B cell (primary cell): ENCODE measurements at regions of chr13 and their contacts with region 1.

Region 1: GRCh38 chr13:27826379-27827353 is 34.4 kb downstream of the GSX1 start:
- DNase-seq: peak; percentile 79
- ATAC-seq: peak; percentile 69
- H3K4me3 ChIP-seq: no peak overlapping the region
- H3K4me3 Mint-ChIP-seq: no peak overlapping the region
- H3K27ac ChIP-seq: no peak overlapping the region
- H3K27ac Mint-ChIP-seq: no peak overlapping the region
- H3K4me1 ChIP-seq: peaks cover 5 to 15% of the 10 kb centered on the region in 2 donors
- H3K4me1 Mint-ChIP-seq: peaks cover 7% of the 10 kb centered on the region
- H3K27me3 ChIP-seq: peaks cover 0 to 76% (median 27%) of the 10 kb centered on the region in 4 experiments
- H3K27me3 Mint-ChIP-seq: peaks cover 76% of the 10 kb centered on the region
- CTCF ChIP-seq: peak; percentile 90

Region 2: DNA sequence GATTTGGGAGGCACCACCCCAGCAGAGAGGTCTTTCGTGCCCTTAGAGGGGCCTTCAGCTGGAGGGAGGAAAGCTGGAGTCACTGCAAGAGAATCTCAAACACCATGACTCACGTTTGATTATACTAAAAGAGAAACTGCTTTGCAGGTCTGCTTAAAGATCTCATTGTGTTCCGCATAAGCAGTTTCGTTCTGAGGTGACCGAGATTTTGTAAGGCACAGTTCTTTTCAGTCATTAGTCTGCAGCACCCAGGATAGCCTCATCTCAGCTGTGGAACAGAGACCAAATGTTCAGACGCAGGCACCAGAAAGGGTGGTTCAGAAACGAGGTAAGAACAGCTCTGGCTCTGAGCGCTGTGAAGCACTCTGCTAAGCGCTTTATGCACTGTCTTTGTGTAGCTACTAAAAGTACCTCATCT is 473.5 kb before region 1 on chr13:
- CTCF ChIA-PET with region 1: interaction called, 322 read pairs
- POLR2A ChIA-PET with region 1: no interaction called
- intact Hi-C with region 1: no loop called
- DNase-seq: peak; percentile 50
- ATAC-seq: peak; percentile 89
- H3K4me3 ChIP-seq: peak overlapping the region in 2 of 5 experiments; percentile 22 to 29
- H3K4me3 Mint-ChIP-seq: peak overlapping the region; percentile 76
- H3K27ac ChIP-seq: peak overlapping the region in 1 of 2 donors; percentile 10
- H3K27ac Mint-ChIP-seq: peak overlapping the region; percentile 71
- H3K4me1 ChIP-seq: peaks cover 4 to 14% of the 10 kb centered on the region in 2 donors
- H3K4me1 Mint-ChIP-seq: peaks cover 17% of the 10 kb centered on the region
- H3K27me3 ChIP-seq: peaks cover 0 to 3% (median 0%) of the 10 kb centered on the region in 4 experiments
- H3K27me3 Mint-ChIP-seq: peaks cover 6% of the 10 kb centered on the region
- CTCF ChIP-seq: no peak

Region 3: GRCh38 chr13:27383127-27383921 is 443.3 kb before region 1 on chr13:
- CTCF ChIA-PET with region 1: interaction called, 374 read pairs
- POLR2A ChIA-PET with region 1: no interaction called
- intact Hi-C with region 1: no loop called
- DNase-seq: no peak
- ATAC-seq: no peak
- H3K4me3 ChIP-seq: no peak overlapping the region
- H3K4me3 Mint-ChIP-seq: no peak overlapping the region
- H3K27ac ChIP-seq: no peak overlapping the region
- H3K27ac Mint-ChIP-seq: no peak overlapping the region
- H3K4me1 ChIP-seq: no peaks in the 10 kb centered on the region
- H3K4me1 Mint-ChIP-seq: no peaks in the 10 kb centered on the region
- H3K27me3 ChIP-seq: peaks cover 0 to 17% (median 0%) of the 10 kb centered on the region in 4 experiments
- H3K27me3 Mint-ChIP-seq: peaks cover 4% of the 10 kb centered on the region
- CTCF ChIP-seq: no peak

Region 4: GRCh38 chr13:27424246-27425157 is 402.2 kb before region 1 on chr13 and contains the start of gene GTF3A:
- CTCF ChIA-PET with region 1: interaction called, 13 read pairs
- POLR2A ChIA-PET with region 1: no interaction called
- intact Hi-C with region 1: no loop called
- DNase-seq: peak; percentile 96
- ATAC-seq: peak; percentile 66
- H3K4me3 ChIP-seq: peak within 1 kb of the TSS; percentile 74 to 97 (median 83)
- H3K4me3 Mint-ChIP-seq: peak within 1 kb of the TSS; percentile 82
- H3K27ac ChIP-seq: peak within 1 kb of the TSS; percentile 78 to 88
- H3K27ac Mint-ChIP-seq: peak within 1 kb of the TSS; percentile 88
- H3K4me1 ChIP-seq: peaks cover 25 to 36% of the 10 kb centered on the region in 2 donors
- H3K4me1 Mint-ChIP-seq: peaks cover 39% of the 10 kb centered on the region
- H3K27me3 ChIP-seq: no peaks in the 10 kb centered on the region
- H3K27me3 Mint-ChIP-seq: no peaks in the 10 kb centered on the region
- CTCF ChIP-seq: no peak
- total RNA-seq, gene GTF3A: 114 and 122 TPM in 2 replicates

Region 5: GRCh38 chr13:27770809-27771208 is 55.9 kb before region 1 on chr13:
- CTCF ChIA-PET with region 1: interaction called, 29 read pairs
- POLR2A ChIA-PET with region 1: no interaction called
- intact Hi-C with region 1: no loop called
- DNase-seq: no peak
- ATAC-seq: no peak
- H3K4me3 ChIP-seq: no peak overlapping the region
- H3K4me3 Mint-ChIP-seq: no peak overlapping the region
- H3K27ac ChIP-seq: no peak overlapping the region
- H3K27ac Mint-ChIP-seq: no peak overlapping the region
- H3K4me1 ChIP-seq: peaks cover 5 to 12% of the 10 kb centered on the region in 2 donors
- H3K4me1 Mint-ChIP-seq: peaks cover 10% of the 10 kb centered on the region
- H3K27me3 ChIP-seq: peaks cover 0 to 17% (median 2%) of the 10 kb centered on the region in 4 experiments
- H3K27me3 Mint-ChIP-seq: peaks cover 48% of the 10 kb centered on the region
- CTCF ChIP-seq: no peak

Region 6: GRCh38 chr13:27919934-27920676 is 93.4 kb after region 1 on chr13 and contains the start of gene PDX1:
- CTCF ChIA-PET with region 1: no interaction called
- POLR2A ChIA-PET with region 1: no interaction called
- intact Hi-C with region 1: loop called (anchors 10 kb)
- DNase-seq: peak; percentile 55
- ATAC-seq: peak; percentile 44
- H3K4me3 ChIP-seq: peak within 1 kb of the TSS in 4 of 5 experiments; percentile 27 to 61 (median 50)
- H3K4me3 Mint-ChIP-seq: peak within 1 kb of the TSS; percentile 81
- H3K27ac ChIP-seq: no peak within 1 kb of the TSS
- H3K27ac Mint-ChIP-seq: no peak within 1 kb of the TSS
- H3K4me1 ChIP-seq: peaks cover 59 to 75% of the 10 kb centered on the region in 2 donors
- H3K4me1 Mint-ChIP-seq: peaks cover 40% of the 10 kb centered on the region
- H3K27me3 ChIP-seq: peaks cover 0 to 95% (median 76%) of the 10 kb centered on the region in 4 experiments
- H3K27me3 Mint-ChIP-seq: peaks cover 66% of the 10 kb centered on the region
- CTCF ChIP-seq: no peak
- total RNA-seq, gene PDX1: not detected in 2 replicates

Region 7: DNA sequence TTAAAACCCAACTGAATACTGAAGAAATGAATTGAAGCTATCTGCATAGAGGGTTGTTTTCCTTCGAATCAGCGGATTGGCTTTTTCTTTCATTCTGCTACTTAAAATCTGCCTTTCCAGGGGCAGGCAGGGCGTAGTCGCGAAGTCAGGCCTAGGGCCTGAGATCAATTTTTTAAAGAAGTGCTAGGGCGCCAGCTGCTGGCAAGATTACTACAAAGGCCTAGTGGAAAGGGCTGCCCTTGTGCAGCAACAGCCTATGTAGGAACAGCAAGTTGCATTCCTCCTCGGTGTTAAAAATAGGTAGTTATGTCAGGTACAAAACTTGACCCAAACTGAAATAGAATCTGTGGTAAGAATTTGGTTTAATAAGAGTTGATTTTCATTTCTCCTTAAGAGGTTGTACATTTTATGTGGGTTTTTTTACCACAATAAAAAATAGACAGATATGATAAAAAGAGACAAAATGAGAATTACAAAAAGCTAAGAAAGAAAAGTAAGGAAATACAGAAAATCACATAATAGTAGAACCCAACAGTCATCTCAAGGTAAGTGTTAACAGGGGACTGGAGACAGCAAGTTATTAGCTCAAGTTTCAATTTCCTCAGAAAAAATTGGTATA is 171.3 kb after region 1 on chr13:
- CTCF ChIA-PET with region 1: interaction called, 18 read pairs
- POLR2A ChIA-PET with region 1: no interaction called
- intact Hi-C with region 1: no loop called
- DNase-seq: peak; percentile 41
- ATAC-seq: peak; percentile 67
- H3K4me3 ChIP-seq: no peak overlapping the region
- H3K4me3 Mint-ChIP-seq: no peak overlapping the region
- H3K27ac ChIP-seq: peak overlapping the region in 1 of 2 donors; percentile 25
- H3K27ac Mint-ChIP-seq: no peak overlapping the region
- H3K4me1 ChIP-seq: no peaks in the 10 kb centered on the region
- H3K4me1 Mint-ChIP-seq: peaks cover 3% of the 10 kb centered on the region
- H3K27me3 ChIP-seq: no peaks in the 10 kb centered on the region
- H3K27me3 Mint-ChIP-seq: no peaks in the 10 kb centered on the region
- CTCF ChIP-seq: peak; percentile 26